A673 (cell line): ENCODE measurements at regions of chr9 and their contacts with region 1.

Region 1: GRCh38 chr9:133490865-133491655 is 12.2 kb upstream of the SLC2A6 start:
- DNase-seq: peak; percentile 22
- H3K4me3 ChIP-seq: no peak overlapping the region
- H3K27ac ChIP-seq: no peak overlapping the region
- H3K4me1 ChIP-seq: no peaks in the 10 kb centered on the region
- H3K27me3 ChIP-seq: no peaks in the 10 kb centered on the region
- CTCF ChIP-seq: no peak

Region 2: GRCh38 chr9:133275105-133276000 is 215.7 kb before region 1 on chr9 and contains the start of gene ABO:
- CTCF ChIA-PET with region 1: no interaction called
- POLR2A ChIA-PET with region 1: no interaction called
- intact Hi-C with region 1: no loop called
- DNase-seq: no peak
- H3K4me3 ChIP-seq: peak within 1 kb of the TSS; percentile 23
- H3K27ac ChIP-seq: no peak within 1 kb of the TSS
- H3K4me1 ChIP-seq: no peaks in the 10 kb centered on the region
- H3K27me3 ChIP-seq: peaks cover 86% of the 10 kb centered on the region
- CTCF ChIP-seq: no peak
- total RNA-seq, gene ABO: not detected in 2 replicates

Region 3: DNA sequence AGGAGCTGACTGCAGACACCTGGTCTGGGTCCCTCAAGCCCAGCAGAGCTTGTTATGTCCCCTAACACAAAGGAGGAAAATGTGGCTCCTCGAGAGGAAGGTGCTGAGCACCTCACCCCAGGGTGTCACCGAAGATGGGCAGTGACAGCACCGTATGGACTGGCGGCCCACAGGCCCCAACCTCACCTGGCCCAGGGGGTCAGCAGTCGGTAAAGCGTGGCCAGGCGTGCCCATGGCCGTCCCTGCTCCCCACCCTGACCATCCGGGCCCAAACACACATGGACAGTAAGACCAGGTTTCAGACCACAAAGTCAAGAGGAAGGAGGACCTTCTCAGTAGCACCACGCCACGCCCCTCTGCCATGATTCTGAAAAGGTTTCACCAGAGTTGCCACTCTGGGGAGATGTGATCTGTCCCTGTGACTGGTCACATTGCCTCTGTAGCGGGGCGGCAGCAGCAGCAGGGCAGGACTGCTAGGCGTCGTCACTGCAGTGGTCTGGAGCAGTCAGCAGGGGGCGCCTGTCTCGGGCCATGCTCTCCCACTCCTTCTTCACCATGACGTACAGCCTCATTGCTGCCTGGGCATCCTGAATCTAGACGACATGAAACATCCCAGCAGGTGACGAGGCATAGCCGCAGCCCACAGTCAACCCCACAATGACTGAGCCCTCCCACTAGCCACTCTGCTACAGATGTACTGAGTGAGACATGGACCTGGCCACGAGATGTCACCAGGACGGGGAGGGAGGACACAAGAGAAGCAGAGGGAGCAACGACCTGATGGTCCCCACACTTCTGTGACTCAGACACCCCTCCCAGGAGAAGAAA is 84.4 kb before region 1 on chr9:
- CTCF ChIA-PET with region 1: no interaction called
- POLR2A ChIA-PET with region 1: interaction called, 22 read pairs
- intact Hi-C with region 1: loop called (anchors 2 kb)
- DNase-seq: peak; percentile 80
- H3K4me3 ChIP-seq: no peak overlapping the region
- H3K27ac ChIP-seq: no peak overlapping the region
- H3K4me1 ChIP-seq: no peaks in the 10 kb centered on the region
- H3K27me3 ChIP-seq: no peaks in the 10 kb centered on the region
- CTCF ChIP-seq: peak; percentile 94

Region 4: DNA sequence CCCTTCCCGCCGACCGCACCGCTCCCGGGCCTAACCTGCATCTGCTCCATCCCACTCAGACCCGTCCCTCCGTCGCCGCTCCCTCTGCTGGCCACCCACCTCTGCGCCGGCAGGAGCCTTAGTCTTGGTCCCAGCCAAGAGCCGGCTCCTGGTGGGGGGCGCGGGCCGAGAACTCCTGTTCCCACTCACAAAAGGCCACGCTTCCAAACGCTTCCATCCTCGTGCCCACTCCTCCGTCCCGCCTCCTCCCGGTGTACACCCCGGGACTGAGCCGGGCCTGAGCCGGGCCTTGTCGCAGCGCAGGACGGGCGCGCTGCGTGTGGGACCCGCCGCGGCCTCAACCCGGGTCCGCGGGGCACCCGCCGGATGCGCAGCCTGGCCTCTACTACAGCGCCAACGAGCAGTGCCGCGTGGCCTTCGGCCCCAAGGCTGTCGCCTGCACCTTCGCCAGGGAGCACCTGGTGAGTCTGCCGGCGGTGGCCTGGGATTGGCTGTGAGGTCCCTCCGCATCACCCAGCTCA is 61.4 kb before region 1 on chr9:
- CTCF ChIA-PET with region 1: no interaction called
- POLR2A ChIA-PET with region 1: no interaction called
- intact Hi-C with region 1: no loop called
- DNase-seq: no peak
- H3K4me3 ChIP-seq: no peak overlapping the region
- H3K27ac ChIP-seq: no peak overlapping the region
- H3K4me1 ChIP-seq: no peaks in the 10 kb centered on the region
- H3K27me3 ChIP-seq: peaks cover 7% of the 10 kb centered on the region
- CTCF ChIP-seq: 0 out of 2 replicates have a peak, but pooled peaks have one; percentile 26

Region 5: GRCh38 chr9:134178768-134179551 is 687.9 kb after region 1 on chr9:
- CTCF ChIA-PET with region 1: no interaction called
- POLR2A ChIA-PET with region 1: no interaction called
- intact Hi-C with region 1: no loop called
- DNase-seq: no peak
- H3K4me3 ChIP-seq: no peak overlapping the region
- H3K27ac ChIP-seq: no peak overlapping the region
- H3K4me1 ChIP-seq: peaks cover 20% of the 10 kb centered on the region
- H3K27me3 ChIP-seq: no peaks in the 10 kb centered on the region
- CTCF ChIP-seq: no peak